ENCODE measurements at regions of chr6 and their contacts with region 1.

Region 1: DNA sequence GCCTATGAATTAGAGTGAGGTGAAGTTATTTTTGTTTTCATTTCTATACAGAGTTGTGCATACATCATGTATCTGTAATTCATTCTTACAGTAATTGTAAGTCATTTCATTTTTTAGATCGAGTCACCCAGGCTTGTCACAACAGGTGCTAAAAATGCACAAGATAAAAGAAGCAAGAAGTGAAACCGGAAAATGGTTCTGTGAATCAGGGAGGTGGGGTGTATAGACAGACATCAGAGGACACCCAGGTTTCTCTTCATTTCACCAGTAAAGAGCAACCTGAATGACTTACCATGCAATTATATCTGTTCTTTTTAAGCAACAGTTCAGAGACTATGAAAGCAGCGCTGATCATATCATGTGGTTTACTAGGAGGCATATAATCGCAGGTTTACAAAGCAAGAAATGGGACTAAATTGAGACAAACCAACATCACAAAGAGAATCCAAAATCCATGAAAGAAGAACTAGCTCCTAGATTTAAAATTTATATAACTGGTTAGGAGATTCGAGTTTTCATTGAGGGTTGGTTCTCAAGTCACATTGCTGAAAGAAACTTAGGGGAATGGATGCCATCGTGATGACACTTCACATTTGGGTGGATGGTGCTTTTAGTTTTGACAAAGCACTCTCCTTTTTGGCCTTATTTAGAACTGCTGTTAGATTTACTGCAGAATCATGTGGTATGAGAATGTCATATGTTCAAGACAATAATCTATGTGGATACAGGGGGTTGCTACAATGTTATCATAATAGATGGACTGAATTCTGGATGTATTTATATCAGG is 27.9 kb upstream of the TBC1D7 start:
- DNase-seq: no peak
- H3K4me3 ChIP-seq: no peak overlapping the region
- H3K27ac ChIP-seq: no peak overlapping the region
- H3K4me1 ChIP-seq: peaks cover 3 to 14% (median 10%) of the 10 kb centered on the region in 4 experiments; a peak in 6 of 7 replicates
- H3K27me3 ChIP-seq: no peaks in the 10 kb centered on the region
- CTCF ChIP-seq: no peak
- EP300 ChIP-seq: no peak
- POLR2A ChIP-seq: no peak
- RAD21 ChIP-seq: no peak

Region 2: DNA sequence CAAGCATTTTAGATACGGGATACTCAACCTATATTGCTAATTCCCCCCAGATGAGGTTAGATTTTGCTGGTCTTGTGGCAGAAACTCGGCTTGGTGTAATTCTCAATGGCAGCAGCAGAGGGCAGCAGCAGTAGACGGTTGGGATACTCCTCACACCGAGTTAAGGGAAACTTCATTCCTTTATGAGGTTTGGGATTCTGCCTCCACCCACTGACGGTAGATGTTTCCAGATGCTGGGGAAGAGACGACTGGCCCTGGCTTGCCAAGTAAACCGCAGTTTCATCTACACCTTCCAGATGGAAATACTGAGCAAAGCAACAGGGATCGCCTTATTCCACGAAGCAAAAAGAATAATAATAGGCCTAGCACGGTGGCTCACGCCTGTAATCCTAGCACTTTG is 19.6 kb before region 1 on chr6:
- CTCF ChIA-PET with region 1: interaction called, 16 read pairs
- POLR2A ChIA-PET with region 1: interaction called, 4 read pairs
- DNase-seq: peak; percentile 88 to 98
- H3K4me3 ChIP-seq: no peak overlapping the region
- H3K27ac ChIP-seq: no peak overlapping the region
- H3K4me1 ChIP-seq: peaks cover 0 to 2% (median 0%) of the 10 kb centered on the region in 4 experiments; a peak in 1 of 7 replicates
- H3K27me3 ChIP-seq: no peaks in the 10 kb centered on the region; a peak in 1 of 7 replicates
- CTCF ChIP-seq: peak; percentile 72 to 98 (median 87)
- EP300 ChIP-seq: no peak
- POLR2A ChIP-seq: no peak
- RAD21 ChIP-seq: peak; percentile 97 to 98

Region 3: GRCh38 chr6:13383328-13384163 is 27.4 kb after region 1 on chr6:
- CTCF ChIA-PET with region 1: interaction called, 11 read pairs
- POLR2A ChIA-PET with region 1: no interaction called
- DNase-seq: no peak
- H3K4me3 ChIP-seq: no peak overlapping the region
- H3K27ac ChIP-seq: no peak overlapping the region
- H3K4me1 ChIP-seq: peaks cover 2 to 5% (median 3%) of the 10 kb centered on the region in 4 experiments; a peak in 4 of 7 replicates
- H3K27me3 ChIP-seq: no peaks in the 10 kb centered on the region
- CTCF ChIP-seq: no peak
- EP300 ChIP-seq: no peak
- POLR2A ChIP-seq: no peak
- RAD21 ChIP-seq: no peak

Region 4: GRCh38 chr6:13767121-13767808 is 411.1 kb after region 1 on chr6:
- CTCF ChIA-PET with region 1: no interaction called
- POLR2A ChIA-PET with region 1: no interaction called
- DNase-seq: no peak
- H3K4me3 ChIP-seq: no peak overlapping the region
- H3K27ac ChIP-seq: no peak overlapping the region
- H3K4me1 ChIP-seq: peaks cover 0 to 4% (median under 1%) of the 10 kb centered on the region in 4 experiments; a peak in 2 of 7 replicates
- H3K27me3 ChIP-seq: no peaks in the 10 kb centered on the region
- CTCF ChIP-seq: no peak
- EP300 ChIP-seq: no peak
- POLR2A ChIP-seq: no peak
- RAD21 ChIP-seq: peak in 1 of 2 experiments; percentile 30; a peak in 2 of 4 replicates

Region 5: DNA sequence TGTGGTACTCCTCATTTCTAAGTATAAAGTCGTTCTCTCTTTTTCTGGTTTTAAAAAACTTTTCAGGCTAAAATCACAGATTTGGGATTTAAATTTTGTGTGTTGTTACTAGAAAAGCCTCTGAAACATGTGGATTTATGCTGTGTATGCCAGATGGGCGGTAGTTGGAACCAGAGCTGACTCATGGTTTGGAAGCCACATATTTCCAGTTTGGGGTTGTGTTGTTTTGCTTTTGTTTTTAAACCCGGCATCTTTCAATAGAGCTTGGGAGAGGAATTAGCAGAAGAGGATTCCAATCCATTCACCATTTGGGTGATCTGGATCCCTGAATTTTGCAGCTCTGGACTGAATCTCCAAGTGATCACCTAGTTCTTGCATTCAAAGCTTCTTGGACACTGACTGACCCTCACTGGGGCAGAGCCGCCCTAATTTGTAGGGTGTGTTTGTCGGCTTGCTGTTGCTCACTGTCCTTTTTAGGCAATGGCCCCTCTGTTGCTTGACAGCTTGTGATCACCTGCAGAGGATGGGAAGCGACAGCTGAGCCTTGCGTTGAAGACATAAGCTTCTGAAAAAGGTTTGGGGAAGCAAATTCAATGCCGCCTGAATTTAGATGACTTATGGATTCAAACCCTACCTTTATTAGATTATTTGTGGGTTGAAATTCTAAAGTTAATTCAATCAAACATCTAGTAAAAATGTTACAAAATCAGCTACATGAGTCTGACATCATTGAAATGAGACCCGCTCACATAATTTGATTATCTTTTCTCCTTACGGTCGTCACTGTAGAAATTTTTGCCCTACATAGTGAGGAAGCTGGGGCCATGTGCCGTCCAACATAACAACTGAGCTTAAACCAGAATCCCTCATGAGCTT is 681.4 kb after region 1 on chr6:
- CTCF ChIA-PET with region 1: no interaction called
- POLR2A ChIA-PET with region 1: no interaction called
- DNase-seq: no peak
- H3K4me3 ChIP-seq: no peak overlapping the region
- H3K27ac ChIP-seq: no peak overlapping the region
- H3K4me1 ChIP-seq: peaks cover 2 to 11% (median 6%) of the 10 kb centered on the region in 4 experiments; a peak in 5 of 7 replicates
- H3K27me3 ChIP-seq: no peaks in the 10 kb centered on the region
- CTCF ChIP-seq: no peak
- EP300 ChIP-seq: no peak
- POLR2A ChIP-seq: no peak
- RAD21 ChIP-seq: no peak